Right ventricle myocardium superior (tissue), 1 donor: ENCODE measurements at regions of chr14 and their contacts with region 1.

Region 1: DNA sequence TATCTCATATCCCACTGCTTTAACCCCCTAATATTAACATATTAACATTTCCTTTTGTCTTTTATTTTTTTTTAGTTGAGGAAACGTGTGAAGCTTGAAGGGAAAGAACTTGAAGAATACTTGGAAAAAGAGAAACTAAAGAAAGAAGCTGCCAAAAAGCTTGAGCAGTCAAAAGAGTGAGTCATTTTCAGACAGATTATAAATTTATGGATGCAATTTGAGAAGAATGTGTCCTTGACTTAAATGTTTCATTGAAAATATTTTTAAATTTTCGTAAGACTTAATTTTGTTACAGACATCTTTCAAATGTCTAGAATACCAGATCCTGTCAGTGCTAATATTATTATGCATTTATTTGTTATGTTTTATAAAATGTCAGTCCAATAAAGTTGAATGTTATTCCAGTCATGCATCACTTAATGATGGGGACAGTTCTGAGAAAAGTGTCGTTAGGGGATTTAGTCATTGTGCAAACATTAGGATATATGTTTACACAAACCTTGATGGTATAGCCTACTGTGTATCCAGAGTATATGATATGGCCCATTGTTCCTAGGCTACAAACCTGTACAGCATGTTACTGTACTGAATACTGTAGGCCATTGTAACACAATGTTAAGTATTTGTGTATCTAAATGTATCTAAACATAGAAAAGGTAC is 32.6 kb downstream of the CPSF2 start:
- DNase-seq: no peak
- ATAC-seq: no peak

Region 2: DNA sequence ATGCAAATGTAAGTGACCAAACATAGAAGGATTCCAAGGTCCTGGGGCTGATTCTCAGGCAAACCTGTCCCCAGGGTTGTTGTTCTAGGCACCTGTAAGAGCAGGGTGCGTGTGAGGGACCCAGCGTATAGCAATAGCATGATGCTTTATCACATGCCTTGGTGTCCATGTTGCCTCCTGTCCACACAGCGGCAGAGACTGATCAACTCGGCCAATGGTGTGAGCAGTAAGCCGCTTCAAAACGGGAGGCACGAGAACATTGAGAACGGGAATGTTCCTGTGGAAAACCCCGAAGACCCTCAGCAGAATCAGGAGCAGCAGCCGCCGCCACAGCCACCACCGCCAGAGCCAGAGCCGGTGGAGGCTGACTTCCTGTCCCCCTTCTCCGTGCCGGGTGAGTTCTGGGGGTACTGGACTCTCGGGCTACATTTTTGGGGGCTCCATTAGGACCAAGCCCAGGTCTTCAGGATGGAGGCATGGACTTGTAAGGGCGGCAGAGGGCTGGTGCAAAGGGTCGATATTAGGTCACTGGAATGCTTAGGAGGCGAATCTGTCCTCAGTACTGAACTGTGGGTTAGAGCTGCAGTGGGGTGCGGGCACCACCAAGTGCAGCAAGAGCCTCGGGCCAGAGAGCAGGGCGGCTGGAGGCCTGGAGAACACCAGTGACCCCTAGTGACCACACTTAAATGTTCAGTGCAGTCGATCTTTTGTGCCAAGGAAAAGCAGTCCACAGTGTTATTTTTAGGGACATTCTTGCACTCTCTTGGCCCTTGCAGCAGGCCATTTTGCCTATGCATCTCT is 302.0 kb after region 1 on chr14:
- intact Hi-C with region 1: loop called (anchors 10 kb)
- DNase-seq: peak; percentile 77
- ATAC-seq: peak; percentile 88